ENCODE measurements at regions of chr20 and their contacts with region 1.

Region 1: GRCh38 chr20:49610701-49611538 is 43.0 kb upstream of the PTGIS start:
- DNase-seq: peak; percentile 88
- H3K4me3 Mint-ChIP-seq: peak overlapping the region; percentile 12
- H3K27ac Mint-ChIP-seq: peak overlapping the region; percentile 14
- H3K4me1 Mint-ChIP-seq: peaks cover 24% of the 10 kb centered on the region
- H3K27me3 Mint-ChIP-seq: peaks cover 8% of the 10 kb centered on the region

Region 2: DNA sequence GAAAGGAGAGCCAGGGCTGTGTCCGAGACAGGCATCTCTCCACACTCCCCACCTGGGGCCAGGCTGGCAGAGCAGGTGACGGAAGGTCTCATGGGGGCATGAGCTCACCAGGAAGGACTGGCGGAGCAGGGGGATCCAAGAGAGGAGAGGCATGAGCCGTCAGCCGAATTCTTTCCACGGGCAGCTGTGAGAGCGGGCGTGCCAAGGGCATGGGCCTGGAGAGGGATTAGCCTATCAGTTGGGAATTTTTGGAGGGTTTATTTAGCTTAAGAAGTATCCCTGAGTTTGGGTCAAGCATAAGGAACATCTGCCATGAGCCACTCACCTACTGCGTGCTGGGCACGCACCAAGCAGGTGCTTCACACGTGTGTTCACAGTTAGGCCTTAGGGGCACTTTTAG is 272.9 kb before region 1 on chr20:
- CTCF ChIA-PET with region 1: interaction called, 7 read pairs
- POLR2A ChIA-PET with region 1: no interaction called
- intact Hi-C with region 1: loop called (anchors 1 kb)
- DNase-seq: no peak
- H3K4me3 Mint-ChIP-seq: no peak overlapping the region
- H3K27ac Mint-ChIP-seq: no peak overlapping the region
- H3K4me1 Mint-ChIP-seq: no peaks in the 10 kb centered on the region
- H3K27me3 Mint-ChIP-seq: peaks cover 10% of the 10 kb centered on the region

Region 3: GRCh38 chr20:49541733-49542513 is 69.0 kb before region 1 on chr20:
- CTCF ChIA-PET with region 1: interaction called, 764 read pairs
- POLR2A ChIA-PET with region 1: interaction called, 18 read pairs
- intact Hi-C with region 1: loop called (anchors 1 kb)
- DNase-seq: peak; percentile 87
- H3K4me3 Mint-ChIP-seq: no peak overlapping the region
- H3K27ac Mint-ChIP-seq: peak overlapping the region; percentile 38
- H3K4me1 Mint-ChIP-seq: peaks cover 17% of the 10 kb centered on the region
- H3K27me3 Mint-ChIP-seq: peaks cover 11% of the 10 kb centered on the region

Region 4: GRCh38 chr20:49713753-49714712 is 103.1 kb after region 1 on chr20 and contains the start of gene B4GALT5:
- CTCF ChIA-PET with region 1: interaction called, 4 read pairs
- POLR2A ChIA-PET with region 1: no interaction called
- intact Hi-C with region 1: loop called (anchors 5 kb)
- DNase-seq: peak; percentile 69
- H3K4me3 Mint-ChIP-seq: peak within 1 kb of the TSS; percentile 86
- H3K27ac Mint-ChIP-seq: peak within 1 kb of the TSS; percentile 83
- H3K4me1 Mint-ChIP-seq: peaks cover 45% of the 10 kb centered on the region
- H3K27me3 Mint-ChIP-seq: no peaks in the 10 kb centered on the region
- total RNA-seq, gene B4GALT5: 20.9 to 21.4 TPM

Region 5: GRCh38 chr20:49888345-49888966 is 277.5 kb after region 1 on chr20:
- CTCF ChIA-PET with region 1: interaction called, 77 read pairs
- POLR2A ChIA-PET with region 1: no interaction called
- intact Hi-C with region 1: no loop called
- DNase-seq: peak; percentile 75
- H3K4me3 Mint-ChIP-seq: no peak overlapping the region
- H3K27ac Mint-ChIP-seq: no peak overlapping the region
- H3K4me1 Mint-ChIP-seq: peaks cover 20% of the 10 kb centered on the region
- H3K27me3 Mint-ChIP-seq: no peaks in the 10 kb centered on the region

Region 6: DNA sequence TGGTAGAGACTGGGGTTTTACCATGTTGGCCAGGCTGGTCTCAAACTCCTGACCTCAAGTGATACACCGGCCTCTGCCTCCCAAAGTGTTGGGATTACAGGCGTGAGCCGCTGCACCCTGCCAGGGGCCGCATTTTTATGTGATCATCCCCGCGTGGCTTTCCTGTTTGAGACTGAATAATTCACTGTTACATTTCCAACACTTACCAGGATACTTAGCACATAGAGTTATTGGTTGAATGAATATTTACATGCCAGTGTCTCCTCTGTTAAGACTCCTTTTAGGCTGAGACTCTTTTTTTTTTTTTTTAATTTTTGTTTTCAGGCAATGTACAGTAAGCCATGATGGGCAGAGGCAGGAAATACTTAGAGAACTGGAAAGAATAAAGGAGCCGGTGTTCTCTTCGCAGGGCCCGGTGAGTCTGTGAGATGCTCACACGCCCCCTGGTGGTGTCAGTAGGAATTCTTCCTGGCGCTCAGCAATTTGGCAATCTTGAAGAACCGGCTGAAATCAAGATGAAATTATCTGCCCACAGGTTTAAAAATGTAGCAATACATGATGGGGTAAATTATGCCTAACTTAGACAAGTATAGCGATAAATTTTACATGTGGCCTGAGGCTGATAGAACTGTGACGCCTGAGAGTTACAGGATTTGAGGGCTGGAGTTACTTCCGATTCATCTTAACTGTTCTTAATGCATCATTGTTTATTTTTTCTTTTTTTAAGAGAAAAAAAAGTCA is 317.7 kb after region 1 on chr20:
- CTCF ChIA-PET with region 1: interaction called, 5 read pairs
- POLR2A ChIA-PET with region 1: no interaction called
- intact Hi-C with region 1: loop called (anchors 2 kb)
- DNase-seq: peak; percentile 86
- H3K4me3 Mint-ChIP-seq: no peak overlapping the region
- H3K27ac Mint-ChIP-seq: no peak overlapping the region
- H3K4me1 Mint-ChIP-seq: peaks cover 5% of the 10 kb centered on the region
- H3K27me3 Mint-ChIP-seq: peaks cover 3% of the 10 kb centered on the region